WTC11 (cell line): ENCODE measurements at regions of chr16 and their contacts with region 1.

Region 1: DNA sequence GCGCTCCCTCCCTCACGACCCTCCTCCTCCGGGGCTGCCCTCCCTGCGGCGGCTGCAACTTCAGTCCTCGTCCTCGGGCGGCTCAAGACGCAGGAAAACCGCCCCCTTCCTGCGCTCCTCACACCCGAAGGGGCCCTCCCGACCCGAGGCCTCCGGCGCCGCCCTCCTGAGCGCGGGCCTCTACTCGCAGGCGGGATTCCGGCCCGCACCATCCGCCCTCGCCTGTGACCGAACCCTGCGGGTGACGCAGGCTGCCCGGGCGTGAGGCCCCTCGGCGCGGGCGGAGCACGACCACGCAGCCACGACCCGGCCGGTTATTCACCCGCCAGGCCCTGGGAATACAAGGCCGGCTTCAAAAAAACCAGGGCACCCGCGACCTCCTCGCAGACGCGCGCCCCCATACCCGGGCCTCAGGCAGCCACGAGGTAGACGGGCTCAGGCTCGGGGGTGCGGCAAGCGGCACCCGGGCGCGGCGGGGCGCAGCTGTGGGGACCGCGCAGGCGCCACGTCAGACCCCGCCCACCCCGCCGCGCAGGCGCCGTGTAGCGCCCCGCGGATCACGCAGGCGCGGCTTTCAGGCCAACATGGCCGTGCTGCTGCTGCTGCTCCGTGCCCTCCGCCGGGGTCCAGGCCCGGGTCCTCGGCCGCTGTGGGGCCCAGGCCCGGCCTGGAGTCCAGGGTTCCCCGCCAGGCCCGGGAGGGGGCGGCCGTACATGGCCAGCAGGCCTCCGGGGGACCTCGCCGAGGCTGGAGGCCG is at the start of gene SPG7:
- DNase-seq: peak; percentile 83
- ATAC-seq: peak; percentile 81
- H3K4me3 Mint-ChIP-seq: peak within 1 kb of the TSS; percentile 88
- H3K27ac Mint-ChIP-seq: peak within 1 kb of the TSS; percentile 68
- H3K4me1 Mint-ChIP-seq: peaks cover 4% of the 10 kb centered on the region; the same call in 1 of the 2 replicates
- H3K27me3 Mint-ChIP-seq: peaks cover 7% of the 10 kb centered on the region; the same call in 1 of the 2 replicates
- CTCF ChIP-seq: no peak
- total RNA-seq, gene SPG7: 132 to 141 TPM (median 133 TPM) in 3 replicates

Region 2: GRCh38 chr16:89556750-89557689 is 49.0 kb after region 1 on chr16:
- CTCF ChIA-PET with region 1: interaction called, 15 read pairs
- POLR2A ChIA-PET with region 1: no interaction called
- DNase-seq: peak; percentile 97
- ATAC-seq: peak; percentile 78
- H3K4me3 Mint-ChIP-seq: peak overlapping the region; percentile 43; the same call in 1 of the 2 replicates
- H3K27ac Mint-ChIP-seq: peak overlapping the region; percentile 94
- H3K4me1 Mint-ChIP-seq: peaks cover 9% of the 10 kb centered on the region
- H3K27me3 Mint-ChIP-seq: no peaks in the 10 kb centered on the region; the same call in 1 of the 2 replicates
- CTCF ChIP-seq: no peak; the same call in 1 of the 2 replicates